ENCODE measurements at regions of chr11 and their contacts with region 1.

Region 1: DNA sequence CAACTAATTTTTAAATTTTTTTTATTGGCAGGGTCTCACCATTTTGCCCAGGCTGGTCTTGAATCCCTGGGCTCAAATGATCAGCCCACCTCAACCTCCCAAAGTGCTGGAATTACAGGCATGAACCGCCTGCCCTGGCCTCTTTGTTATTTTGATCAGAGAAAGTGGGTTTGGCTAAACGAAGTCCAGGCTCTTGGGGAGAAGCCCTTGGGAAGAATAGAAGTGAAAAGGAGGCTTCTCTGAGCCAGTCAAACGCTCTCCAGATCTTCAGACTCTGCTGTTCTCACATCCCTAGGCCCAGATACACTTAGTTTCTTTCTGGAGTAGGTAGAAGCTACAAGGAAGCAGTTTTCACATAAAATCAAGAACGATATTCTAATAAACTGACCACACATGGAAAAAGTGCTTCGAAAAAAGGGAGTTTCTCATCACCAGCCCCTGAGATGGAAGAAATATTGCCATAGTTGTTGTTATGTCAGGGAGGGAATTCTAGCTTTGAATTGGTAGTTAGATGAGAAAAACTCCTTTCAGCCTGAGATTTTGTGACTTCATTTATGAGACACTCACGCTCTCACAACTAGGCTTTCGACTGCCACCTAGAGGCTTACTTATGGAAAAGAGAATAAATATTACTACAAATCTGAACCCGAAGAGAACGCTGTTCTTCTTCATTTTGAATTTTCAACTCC is 41.7 kb upstream of the AQP11 start:
- DNase-seq: peak; percentile 50
- H3K4me3 ChIP-seq: no peak overlapping the region
- H3K27ac ChIP-seq: no peak overlapping the region
- H3K27me3 ChIP-seq: no peaks in the 10 kb centered on the region
- CTCF ChIP-seq: peak; percentile 74

Region 2: GRCh38 chr11:77127232-77127911 is 420.6 kb before region 1 on chr11:
- CTCF ChIA-PET with region 1: interaction called, 39 read pairs
- POLR2A ChIA-PET with region 1: no interaction called
- DNase-seq: no peak
- H3K4me3 ChIP-seq: peak overlapping the region; percentile 59
- H3K27ac ChIP-seq: no peak overlapping the region
- H3K27me3 ChIP-seq: no peaks in the 10 kb centered on the region
- CTCF ChIP-seq: peak; percentile 100

Region 3: DNA sequence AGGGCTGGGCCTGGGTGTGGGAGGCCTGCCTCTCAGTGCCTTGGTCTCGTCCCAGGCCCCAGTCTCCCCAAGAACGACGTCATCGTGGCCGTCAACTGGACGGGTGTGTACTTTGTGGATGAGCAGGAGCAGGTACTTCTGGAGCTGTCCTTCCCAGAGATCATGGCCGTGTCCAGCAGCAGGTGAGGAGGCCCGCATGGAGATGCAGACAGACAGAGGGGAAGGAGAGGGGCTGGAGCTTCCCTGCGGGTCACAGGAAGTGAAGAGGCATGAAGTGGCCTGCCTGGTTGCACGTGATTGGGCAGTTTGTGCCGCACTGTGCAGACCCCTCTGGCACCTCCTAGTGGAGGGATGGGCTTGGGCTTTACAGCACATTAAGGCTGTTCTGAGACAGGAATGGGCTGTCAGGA is 349.6 kb before region 1 on chr11:
- CTCF ChIA-PET with region 1: interaction called, 93 read pairs
- POLR2A ChIA-PET with region 1: no interaction called
- DNase-seq: no peak
- H3K4me3 ChIP-seq: no peak overlapping the region
- H3K27ac ChIP-seq: no peak overlapping the region
- H3K27me3 ChIP-seq: no peaks in the 10 kb centered on the region
- CTCF ChIP-seq: peak; percentile 44

Region 4: DNA sequence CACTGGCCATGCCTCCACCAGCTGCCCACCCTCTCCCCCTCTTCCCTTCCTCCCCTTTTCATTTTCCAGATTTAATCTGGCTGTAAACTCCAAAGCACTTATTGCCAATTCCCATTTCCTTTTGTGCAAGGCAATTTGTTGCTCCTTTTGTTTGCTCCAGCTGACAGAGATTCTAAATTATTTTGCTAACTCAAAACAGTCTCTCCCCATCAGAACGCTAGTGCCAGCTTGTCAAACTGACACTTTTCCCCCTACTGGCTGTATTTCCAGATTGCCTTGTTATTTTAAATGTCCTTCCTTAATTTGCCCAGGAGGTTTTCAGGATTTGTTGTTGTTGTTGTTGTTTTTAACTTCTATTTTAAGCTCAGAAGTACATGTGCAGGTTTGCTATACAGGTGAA is 17.1 kb before region 1 on chr11:
- CTCF ChIA-PET with region 1: interaction called, 10 read pairs
- POLR2A ChIA-PET with region 1: no interaction called
- DNase-seq: no peak
- H3K4me3 ChIP-seq: no peak overlapping the region
- H3K27ac ChIP-seq: no peak overlapping the region
- H3K27me3 ChIP-seq: no peaks in the 10 kb centered on the region
- CTCF ChIP-seq: no peak

Region 5: GRCh38 chr11:77619576-77620198 is 71.7 kb after region 1 on chr11:
- CTCF ChIA-PET with region 1: interaction called, 12 read pairs
- POLR2A ChIA-PET with region 1: no interaction called
- DNase-seq: no peak
- H3K4me3 ChIP-seq: no peak overlapping the region
- H3K27ac ChIP-seq: no peak overlapping the region
- H3K27me3 ChIP-seq: no peaks in the 10 kb centered on the region
- CTCF ChIP-seq: peak; percentile 81